CD8-positive, alpha-beta T cell (primary cell): ENCODE measurements at regions of chr21 and their contacts with region 1.

Region 1: DNA sequence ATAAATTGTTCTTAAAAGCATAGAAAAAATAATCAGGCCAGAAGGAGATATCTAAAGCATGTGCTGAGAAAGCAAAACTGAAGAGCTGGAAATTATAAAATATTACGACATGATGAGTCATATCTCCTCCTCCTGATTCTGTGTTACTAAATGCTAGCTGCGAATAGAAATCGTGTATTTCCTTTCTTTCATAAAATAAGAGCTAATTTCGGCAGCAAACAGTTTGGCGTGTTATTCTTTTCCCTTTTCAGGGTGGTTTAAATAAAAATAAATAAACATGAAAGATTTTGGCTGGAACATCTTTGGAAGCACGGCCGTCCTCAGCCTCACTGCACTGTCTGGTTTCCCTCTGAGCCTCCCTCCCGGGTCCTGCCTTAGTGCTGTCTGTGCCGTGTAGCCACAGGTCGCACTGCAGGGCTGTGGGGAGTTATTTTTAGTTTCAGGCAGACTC is 56.0 kb downstream of the ADARB1 start:
- DNase-seq: no peak
- ATAC-seq: no peak
- H3K4me3 ChIP-seq: no peak overlapping the region
- H3K4me3 Mint-ChIP-seq: no peak overlapping the region
- H3K27ac ChIP-seq: no peak overlapping the region
- H3K27ac Mint-ChIP-seq: no peak overlapping the region
- H3K4me1 ChIP-seq: peaks cover 5% of the 10 kb centered on the region
- H3K4me1 Mint-ChIP-seq: peaks cover 21% of the 10 kb centered on the region
- H3K27me3 ChIP-seq: no peaks in the 10 kb centered on the region
- H3K27me3 Mint-ChIP-seq: no peaks in the 10 kb centered on the region
- CTCF ChIP-seq: no peak

Region 2: DNA sequence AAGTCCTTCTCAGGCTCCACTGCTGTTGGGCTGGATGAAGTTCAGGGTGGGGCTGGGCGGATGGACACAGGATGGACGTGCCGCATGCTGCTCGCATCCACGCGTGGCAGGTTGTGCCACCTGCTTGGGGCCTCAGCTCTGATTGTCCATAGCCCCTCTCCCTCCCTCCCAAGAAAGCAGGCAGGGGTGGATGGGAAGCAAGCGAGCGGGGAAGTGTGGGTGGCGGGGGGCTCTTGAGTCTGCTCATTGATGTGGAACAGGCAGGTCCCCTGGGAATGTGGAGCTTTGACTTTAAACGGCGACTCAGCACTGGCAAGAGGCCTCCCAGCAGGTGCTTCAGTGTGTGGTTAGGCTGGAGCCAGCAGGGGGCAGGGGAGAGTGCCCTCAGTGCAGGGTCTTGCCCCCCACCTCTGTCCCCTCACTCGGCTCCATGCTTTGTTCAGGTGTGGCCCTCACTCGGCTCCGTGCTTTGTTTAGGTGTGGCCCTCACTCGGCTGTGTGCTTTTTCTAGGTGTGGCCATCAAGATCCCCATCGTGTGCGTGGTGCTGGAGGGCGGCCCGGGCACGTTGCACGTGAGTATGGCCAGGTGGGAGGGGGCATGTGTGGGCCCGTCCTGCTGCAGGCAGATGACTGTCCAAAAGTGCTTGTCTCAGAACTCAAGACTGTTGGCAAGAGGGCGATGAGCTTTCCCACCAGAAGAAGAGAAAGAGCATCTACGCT is 753.0 kb before region 1 on chr21:
- CTCF ChIA-PET with region 1: no interaction called
- POLR2A ChIA-PET with region 1: no interaction called
- intact Hi-C with region 1: no loop called
- DNase-seq: no peak
- ATAC-seq: no peak
- H3K4me3 ChIP-seq: no peak overlapping the region
- H3K4me3 Mint-ChIP-seq: no peak overlapping the region
- H3K27ac ChIP-seq: no peak overlapping the region
- H3K27ac Mint-ChIP-seq: no peak overlapping the region
- H3K4me1 ChIP-seq: peaks cover 23% of the 10 kb centered on the region
- H3K4me1 Mint-ChIP-seq: peaks cover 24% of the 10 kb centered on the region
- H3K27me3 ChIP-seq: no peaks in the 10 kb centered on the region
- H3K27me3 Mint-ChIP-seq: no peaks in the 10 kb centered on the region
- CTCF ChIP-seq: no peak

Region 3: DNA sequence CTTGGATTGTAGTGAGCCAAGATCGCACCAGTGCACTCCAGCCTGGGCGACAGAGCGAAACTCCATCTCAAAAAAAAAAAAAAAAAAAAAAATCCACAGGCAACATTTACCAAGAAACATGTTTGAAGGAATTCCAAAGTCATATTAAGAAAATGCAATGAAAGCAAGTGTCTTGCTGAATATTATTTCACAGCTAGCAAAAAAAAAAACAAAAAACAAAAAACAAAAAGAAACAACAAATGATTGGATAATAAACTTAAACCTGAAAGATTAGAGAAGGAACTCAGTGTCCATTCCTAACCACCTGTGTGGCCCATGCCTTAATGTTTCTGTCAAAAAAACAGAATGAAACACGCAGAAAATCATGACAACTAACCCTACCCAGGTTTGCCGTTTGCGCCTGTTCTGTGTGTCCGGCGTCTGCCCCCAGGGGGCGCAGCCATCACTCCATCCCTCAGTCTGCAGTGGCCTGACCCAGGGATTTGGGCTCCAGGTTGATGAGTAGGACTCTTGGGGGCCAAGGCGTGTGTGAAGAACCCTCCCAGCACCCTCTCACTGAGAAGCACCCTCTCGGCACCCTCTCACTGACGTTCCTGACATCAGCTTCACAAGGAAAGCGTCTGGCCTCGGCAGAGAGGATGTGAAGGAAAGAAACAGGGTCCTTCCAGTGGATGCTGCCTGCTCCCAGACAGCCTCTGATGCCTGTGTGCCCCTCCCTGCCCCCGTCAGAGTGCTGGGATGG is 237.6 kb before region 1 on chr21:
- CTCF ChIA-PET with region 1: interaction called, 4 read pairs
- POLR2A ChIA-PET with region 1: no interaction called
- intact Hi-C with region 1: loop called in 1 of 2 experiments (anchors 2 kb)
- DNase-seq: peak; percentile 56 to 86 (median 82)
- ATAC-seq: peak; percentile 90
- H3K4me3 ChIP-seq: no peak overlapping the region
- H3K4me3 Mint-ChIP-seq: no peak overlapping the region
- H3K27ac ChIP-seq: peak overlapping the region in 1 of 2 experiments; percentile 34
- H3K27ac Mint-ChIP-seq: peak overlapping the region; percentile 79
- H3K4me1 ChIP-seq: peaks cover 13% of the 10 kb centered on the region
- H3K4me1 Mint-ChIP-seq: peaks cover 15% of the 10 kb centered on the region
- H3K27me3 ChIP-seq: no peaks in the 10 kb centered on the region
- H3K27me3 Mint-ChIP-seq: no peaks in the 10 kb centered on the region
- CTCF ChIP-seq: peak; percentile 96

Region 4: GRCh38 chr21:44949779-44950198 is 180.6 kb before region 1 on chr21:
- CTCF ChIA-PET with region 1: interaction called, 340 read pairs
- POLR2A ChIA-PET with region 1: interaction called, 6 read pairs
- intact Hi-C with region 1: loop called in 1 of 2 experiments (anchors 1 kb)
- DNase-seq: peak; percentile 64 to 92 (median 84)
- ATAC-seq: peak; percentile 85
- H3K4me3 ChIP-seq: no peak overlapping the region
- H3K4me3 Mint-ChIP-seq: no peak overlapping the region
- H3K27ac ChIP-seq: no peak overlapping the region
- H3K27ac Mint-ChIP-seq: no peak overlapping the region
- H3K4me1 ChIP-seq: peaks cover 8% of the 10 kb centered on the region
- H3K4me1 Mint-ChIP-seq: peaks cover 17% of the 10 kb centered on the region
- H3K27me3 ChIP-seq: no peaks in the 10 kb centered on the region
- H3K27me3 Mint-ChIP-seq: no peaks in the 10 kb centered on the region
- CTCF ChIP-seq: peak; percentile 80

Region 5: GRCh38 chr21:45050786-45051489 is 79.4 kb before region 1 on chr21:
- CTCF ChIA-PET with region 1: interaction called, 8 read pairs
- POLR2A ChIA-PET with region 1: no interaction called
- intact Hi-C with region 1: loop called in 1 of 2 experiments (anchors 5 kb)
- DNase-seq: no peak
- ATAC-seq: no peak
- H3K4me3 ChIP-seq: no peak overlapping the region
- H3K4me3 Mint-ChIP-seq: no peak overlapping the region
- H3K27ac ChIP-seq: no peak overlapping the region
- H3K27ac Mint-ChIP-seq: no peak overlapping the region
- H3K4me1 ChIP-seq: no peaks in the 10 kb centered on the region
- H3K4me1 Mint-ChIP-seq: no peaks in the 10 kb centered on the region
- H3K27me3 ChIP-seq: no peaks in the 10 kb centered on the region
- H3K27me3 Mint-ChIP-seq: peaks cover 21% of the 10 kb centered on the region
- CTCF ChIP-seq: no peak

Region 6: DNA sequence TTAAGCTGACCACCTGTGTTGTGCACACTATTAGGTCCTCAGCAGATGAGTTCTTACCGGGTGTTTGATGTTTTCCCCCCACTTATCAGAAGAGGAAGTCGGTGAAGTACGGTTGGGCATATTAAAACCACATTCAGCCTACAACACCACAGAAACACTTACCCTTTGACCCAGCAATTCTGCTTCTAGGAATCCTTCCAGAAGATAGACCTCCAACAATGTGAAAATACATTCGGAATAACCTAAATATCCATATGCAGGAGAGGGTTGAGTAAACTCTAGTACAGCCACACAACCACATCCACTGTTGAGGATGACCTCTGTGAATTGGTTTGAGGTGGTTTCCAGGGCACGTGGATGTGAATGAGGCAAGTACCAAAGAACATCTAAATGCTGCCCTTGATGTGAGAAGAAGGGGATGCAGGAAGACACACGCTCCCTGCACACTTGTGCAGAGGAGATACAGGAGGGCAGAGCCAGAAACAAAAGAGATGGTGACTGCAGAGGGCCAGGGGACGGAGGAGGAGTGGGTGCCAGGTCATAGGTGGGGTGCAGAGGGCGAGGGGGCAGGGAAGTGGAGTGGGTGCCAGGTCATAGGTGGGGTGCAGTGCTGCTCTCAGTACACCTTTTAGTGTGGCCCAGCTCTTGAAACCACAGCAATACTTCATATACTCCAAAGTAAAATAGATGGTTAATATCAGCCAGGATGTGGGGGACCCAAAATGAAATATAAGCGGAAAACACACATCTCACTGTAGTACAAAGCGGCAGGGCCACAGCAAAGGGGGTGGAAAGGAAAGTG is 43.1 kb before region 1 on chr21:
- CTCF ChIA-PET with region 1: interaction called, 16 read pairs
- POLR2A ChIA-PET with region 1: no interaction called
- intact Hi-C with region 1: no loop called
- DNase-seq: peak in 3 of 9 experiments; percentile 47 to 68 (median 49)
- ATAC-seq: peak; percentile 53
- H3K4me3 ChIP-seq: peak overlapping the region in 1 of 2 experiments; percentile 2
- H3K4me3 Mint-ChIP-seq: peak overlapping the region; percentile 67
- H3K27ac ChIP-seq: no peak overlapping the region
- H3K27ac Mint-ChIP-seq: peak overlapping the region; percentile 49
- H3K4me1 ChIP-seq: peaks cover 75% of the 10 kb centered on the region
- H3K4me1 Mint-ChIP-seq: peaks cover 74% of the 10 kb centered on the region
- H3K27me3 ChIP-seq: no peaks in the 10 kb centered on the region
- H3K27me3 Mint-ChIP-seq: no peaks in the 10 kb centered on the region
- CTCF ChIP-seq: no peak

Region 7: GRCh38 chr21:45104560-45104959 is 25.8 kb before region 1 on chr21:
- CTCF ChIA-PET with region 1: interaction called, 26 read pairs
- POLR2A ChIA-PET with region 1: no interaction called
- intact Hi-C with region 1: no loop called
- DNase-seq: peak in 2 of 9 experiments; percentile 47 to 70
- ATAC-seq: peak; percentile 64
- H3K4me3 ChIP-seq: no peak overlapping the region
- H3K4me3 Mint-ChIP-seq: peak overlapping the region; percentile 39
- H3K27ac ChIP-seq: no peak overlapping the region
- H3K27ac Mint-ChIP-seq: peak overlapping the region; percentile 32
- H3K4me1 ChIP-seq: peaks cover 23% of the 10 kb centered on the region
- H3K4me1 Mint-ChIP-seq: peaks cover 66% of the 10 kb centered on the region
- H3K27me3 ChIP-seq: no peaks in the 10 kb centered on the region
- H3K27me3 Mint-ChIP-seq: no peaks in the 10 kb centered on the region
- CTCF ChIP-seq: no peak

Region 8: DNA sequence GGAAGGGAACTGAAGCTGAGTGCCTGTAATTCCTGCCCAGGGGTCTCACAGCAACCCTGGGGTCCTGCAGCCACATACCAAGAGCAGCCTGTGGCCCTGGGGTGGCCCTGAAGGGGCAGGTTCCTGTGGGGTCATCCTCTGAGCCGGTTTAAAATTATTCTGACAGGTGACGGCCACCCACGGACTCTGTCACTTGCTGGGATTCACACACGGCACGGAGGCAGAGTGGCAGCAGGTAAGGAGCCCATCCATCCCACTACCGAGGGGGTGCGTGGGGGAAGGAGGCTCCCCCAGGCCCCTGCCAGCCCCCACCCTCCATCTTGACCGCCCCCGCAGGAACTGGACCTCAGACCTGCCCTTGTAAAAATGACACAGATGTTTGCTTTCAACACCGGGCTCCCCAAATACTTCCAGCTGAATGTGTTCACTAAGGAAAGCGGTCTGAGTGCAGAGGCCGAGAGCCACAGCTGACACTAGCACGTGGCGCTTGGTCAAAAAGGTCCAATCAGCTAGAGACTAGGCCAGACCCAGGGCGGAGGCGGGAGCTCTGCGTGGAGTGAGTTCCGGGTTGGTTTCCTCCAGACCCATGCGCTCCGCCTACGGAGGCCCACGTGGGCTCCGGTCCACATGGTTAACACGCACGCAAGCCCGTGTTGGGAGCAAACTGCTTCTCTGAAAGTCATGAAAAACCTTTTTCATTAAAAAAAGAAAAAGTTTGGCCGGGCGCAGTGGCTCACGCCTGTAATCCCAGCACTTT is 1165.8 kb after region 1 on chr21:
- CTCF ChIA-PET with region 1: no interaction called
- POLR2A ChIA-PET with region 1: no interaction called
- intact Hi-C with region 1: no loop called
- DNase-seq: peak in 8 of 9 experiments; percentile 26 to 74 (median 54)
- ATAC-seq: peak; percentile 87
- H3K4me3 ChIP-seq: peak overlapping the region in 1 of 2 experiments; percentile 6
- H3K4me3 Mint-ChIP-seq: peak overlapping the region; percentile 69
- H3K27ac ChIP-seq: peak overlapping the region in 1 of 2 experiments; percentile 46
- H3K27ac Mint-ChIP-seq: peak overlapping the region; percentile 57
- H3K4me1 ChIP-seq: peaks cover 6% of the 10 kb centered on the region
- H3K4me1 Mint-ChIP-seq: peaks cover 4% of the 10 kb centered on the region
- H3K27me3 ChIP-seq: peaks cover 0 to 4% of the 10 kb centered on the region in 2 experiments
- H3K27me3 Mint-ChIP-seq: peaks cover 4% of the 10 kb centered on the region
- CTCF ChIP-seq: no peak

Region 9: GRCh38 chr21:46431884-46432488 is 1301.6 kb after region 1 on chr21:
- CTCF ChIA-PET with region 1: no interaction called
- POLR2A ChIA-PET with region 1: no interaction called
- intact Hi-C with region 1: no loop called
- DNase-seq: peak in 6 of 9 experiments; percentile 19 to 62 (median 50)
- ATAC-seq: peak; percentile 67
- H3K4me3 ChIP-seq: no peak overlapping the region
- H3K4me3 Mint-ChIP-seq: peak overlapping the region; percentile 59
- H3K27ac ChIP-seq: peak overlapping the region; percentile 19 to 37
- H3K27ac Mint-ChIP-seq: peak overlapping the region; percentile 90
- H3K4me1 ChIP-seq: peaks cover 15% of the 10 kb centered on the region
- H3K4me1 Mint-ChIP-seq: peaks cover 14% of the 10 kb centered on the region
- H3K27me3 ChIP-seq: no peaks in the 10 kb centered on the region
- H3K27me3 Mint-ChIP-seq: no peaks in the 10 kb centered on the region
- CTCF ChIP-seq: no peak